ENCODE measurements at regions of chr7 and their contacts with region 1.

Region 1: GRCh38 chr7:98341106-98341505 is 59.6 kb downstream of the BRI3 start:
- DNase-seq: no peak
- H3K4me3 ChIP-seq: no peak overlapping the region
- H3K27ac ChIP-seq: no peak overlapping the region
- H3K27me3 ChIP-seq: no peaks in the 10 kb centered on the region
- CTCF ChIP-seq: no peak

Region 2: GRCh38 chr7:98323597-98324322 is 17.3 kb before region 1 on chr7:
- CTCF ChIA-PET with region 1: no interaction called
- POLR2A ChIA-PET with region 1: no interaction called
- DNase-seq: no peak
- H3K4me3 ChIP-seq: peak overlapping the region; percentile 27
- H3K27ac ChIP-seq: no peak overlapping the region
- H3K27me3 ChIP-seq: no peaks in the 10 kb centered on the region
- CTCF ChIP-seq: no peak

Region 3: GRCh38 chr7:98354511-98355257 is 13.6 kb after region 1 on chr7:
- CTCF ChIA-PET with region 1: interaction called, 10 read pairs
- POLR2A ChIA-PET with region 1: no interaction called
- DNase-seq: no peak
- H3K4me3 ChIP-seq: no peak overlapping the region
- H3K27ac ChIP-seq: peak overlapping the region; percentile 73
- H3K27me3 ChIP-seq: no peaks in the 10 kb centered on the region
- CTCF ChIP-seq: no peak

Measured in AG04450 (cell line).